Activated CD4-positive, alpha-beta T cell treated with anti-CD3 and anti-CD28 coated beads, Interleukin-2, amount 10 ng/mL, durations not matched to agents 24 days and 14 days (primary cell): ENCODE measurements at regions of chr11 and their contacts with region 1.

Region 1: GRCh38 chr11:119356349-119357031 is 10.0 kb upstream of the MFRP start:
- DNase-seq: peak; percentile 92
- H3K4me3 Mint-ChIP-seq: peak overlapping the region; percentile 87
- H3K27ac Mint-ChIP-seq: peak overlapping the region; percentile 76
- H3K4me1 Mint-ChIP-seq: peaks cover 5% of the 10 kb centered on the region
- H3K27me3 Mint-ChIP-seq: peaks cover 39% of the 10 kb centered on the region

Region 2: DNA sequence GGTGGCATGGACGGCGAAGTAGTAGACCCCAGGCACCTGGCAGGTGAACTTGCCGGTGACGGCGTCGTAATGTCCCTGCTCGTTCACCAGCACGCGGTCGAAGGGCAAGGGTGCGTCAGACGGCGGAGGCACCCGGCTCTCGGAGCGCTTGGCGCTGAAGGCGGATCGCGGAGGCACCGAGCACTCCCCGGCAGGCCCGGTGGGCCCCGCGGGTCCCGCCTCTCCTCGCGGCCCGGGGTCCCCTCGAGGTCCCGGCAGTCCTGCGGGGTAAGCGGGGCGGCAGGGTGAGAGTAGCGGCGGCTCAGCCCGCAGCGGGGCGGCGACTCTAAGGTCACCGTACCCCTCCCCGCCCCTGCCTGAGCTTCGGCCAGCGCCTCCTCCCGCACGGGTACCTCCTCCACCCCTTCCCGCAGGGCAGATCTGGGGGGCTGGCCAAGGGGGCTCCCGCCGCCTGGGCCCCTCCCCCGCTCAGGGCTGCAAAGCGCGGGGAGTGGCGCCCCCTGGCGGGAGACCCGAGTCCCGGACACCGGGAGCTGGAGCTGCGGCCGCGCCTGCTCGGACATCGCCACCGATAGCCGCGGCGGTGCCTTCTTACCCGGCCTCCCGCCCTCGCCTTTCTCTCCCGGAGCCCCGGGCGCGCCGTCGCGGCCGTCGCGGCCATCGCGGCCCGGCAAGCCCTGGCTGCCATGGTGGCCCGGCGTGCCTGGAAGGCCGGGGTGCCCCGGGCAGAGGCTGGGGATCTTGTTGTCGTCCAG is 16.7 kb before region 1 on chr11:
- intact Hi-C with region 1: no loop called
- DNase-seq: peak; percentile 87
- H3K4me3 Mint-ChIP-seq: peak overlapping the region; percentile 65
- H3K27ac Mint-ChIP-seq: no peak overlapping the region
- H3K4me1 Mint-ChIP-seq: peaks cover 24% of the 10 kb centered on the region
- H3K27me3 Mint-ChIP-seq: peaks cover 41% of the 10 kb centered on the region

Region 3: GRCh38 chr11:119373921-119374631 is 17.6 kb after region 1 on chr11:
- intact Hi-C with region 1: loop called (anchors 1 kb)
- DNase-seq: peak; percentile 83
- H3K4me3 Mint-ChIP-seq: no peak overlapping the region
- H3K27ac Mint-ChIP-seq: no peak overlapping the region
- H3K4me1 Mint-ChIP-seq: no peaks in the 10 kb centered on the region
- H3K27me3 Mint-ChIP-seq: peaks cover 8% of the 10 kb centered on the region

Region 4: DNA sequence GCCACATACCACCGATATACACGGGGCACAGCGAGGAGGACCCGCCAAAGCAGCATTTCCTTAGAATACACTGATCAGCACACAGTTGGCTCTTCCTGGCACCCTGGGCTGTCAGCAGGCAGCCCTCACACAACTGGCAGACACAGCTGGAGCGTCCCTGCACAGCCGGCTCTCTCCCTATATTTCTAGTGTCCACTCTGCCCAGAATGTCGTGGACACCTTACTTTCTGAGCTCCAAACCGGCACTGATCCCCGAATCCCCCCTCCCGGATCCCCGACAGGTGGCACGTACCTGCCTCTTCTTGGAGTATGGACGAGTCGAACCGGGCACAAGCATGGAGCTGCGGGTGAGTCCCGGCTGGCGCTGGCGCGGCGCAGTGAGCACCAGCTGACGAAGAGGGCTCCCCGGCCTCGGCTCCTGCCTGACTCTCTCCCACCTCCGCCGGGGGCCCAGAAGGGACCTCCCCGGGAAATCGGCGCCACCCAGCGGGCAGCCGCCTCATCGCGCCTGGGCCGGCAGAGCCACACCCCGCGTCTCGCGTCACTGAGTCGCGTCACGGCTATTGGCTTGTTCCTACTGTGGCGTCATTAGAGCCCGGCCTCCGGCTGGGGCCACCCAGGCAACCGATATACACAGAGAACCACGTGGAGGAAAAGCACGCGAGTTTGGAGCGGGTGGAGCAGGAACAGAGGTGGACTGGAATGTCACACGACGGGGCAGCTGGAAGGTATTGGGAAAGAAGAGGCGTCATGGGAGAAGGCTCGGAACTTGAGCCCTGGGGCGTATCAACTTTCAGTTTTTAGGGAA is 24.9 kb after region 1 on chr11 and contains the start of gene USP2:
- intact Hi-C with region 1: loop called (anchors 1 kb)
- DNase-seq: peak; percentile 99
- H3K4me3 Mint-ChIP-seq: no peak within 1 kb of the TSS
- H3K27ac Mint-ChIP-seq: no peak within 1 kb of the TSS
- H3K4me1 Mint-ChIP-seq: peaks cover 10% of the 10 kb centered on the region
- H3K27me3 Mint-ChIP-seq: peaks cover 6% of the 10 kb centered on the region
- total RNA-seq, gene USP2: 0.09 and 0.35 TPM in 2 replicates

Region 5: GRCh38 chr11:119474682-119475596 is 118.4 kb after region 1 on chr11:
- intact Hi-C with region 1: loop called (anchors 1 kb)
- DNase-seq: peak; percentile 85
- H3K4me3 Mint-ChIP-seq: no peak overlapping the region
- H3K27ac Mint-ChIP-seq: no peak overlapping the region
- H3K4me1 Mint-ChIP-seq: no peaks in the 10 kb centered on the region
- H3K27me3 Mint-ChIP-seq: peaks cover 5% of the 10 kb centered on the region